Heart right ventricle (tissue), 16 donors: ENCODE measurements at regions of chr5 and their contacts with region 1.

Region 1: DNA sequence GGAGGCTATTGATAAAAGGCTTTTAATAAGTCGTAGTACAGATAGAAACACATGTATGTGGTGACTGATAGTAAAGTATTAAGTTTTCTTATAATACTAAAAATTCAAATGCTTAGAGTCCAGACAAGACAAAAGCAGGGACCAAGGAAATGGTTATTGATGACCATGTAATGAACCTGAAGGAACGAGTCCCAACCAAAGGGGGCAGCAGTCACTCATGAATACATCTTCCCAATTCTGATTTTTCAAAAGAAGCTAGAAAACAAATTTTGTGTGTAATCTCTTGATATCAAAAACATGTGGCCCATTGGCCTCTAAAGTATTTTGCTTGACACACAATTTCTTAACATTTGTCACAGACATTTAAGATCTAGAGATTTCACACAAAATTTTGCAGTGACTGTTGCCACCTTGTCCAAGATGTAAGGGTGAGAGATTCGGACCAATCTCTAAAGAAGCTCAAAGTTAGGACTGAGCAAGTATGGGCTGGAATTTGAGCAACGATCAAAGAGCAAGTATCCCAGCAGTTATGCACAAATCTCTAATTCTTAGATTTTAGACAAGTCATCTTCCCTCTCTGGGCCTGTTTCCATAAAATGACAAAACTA is 66.8 kb downstream of the ARL15 start:
- DNase-seq: peak in 1 of 2 donors; percentile 21
- ATAC-seq: no peak
- H3K4me3 ChIP-seq: no peak overlapping the region
- H3K27ac ChIP-seq: no peak overlapping the region
- H3K4me1 ChIP-seq: peaks cover 0 to 70% (median 14%) of the 10 kb centered on the region in 9 donors
- H3K27me3 ChIP-seq: no peaks in the 10 kb centered on the region
- CTCF ChIP-seq: peak; percentile 29 to 81 (median 70)

Region 2: DNA sequence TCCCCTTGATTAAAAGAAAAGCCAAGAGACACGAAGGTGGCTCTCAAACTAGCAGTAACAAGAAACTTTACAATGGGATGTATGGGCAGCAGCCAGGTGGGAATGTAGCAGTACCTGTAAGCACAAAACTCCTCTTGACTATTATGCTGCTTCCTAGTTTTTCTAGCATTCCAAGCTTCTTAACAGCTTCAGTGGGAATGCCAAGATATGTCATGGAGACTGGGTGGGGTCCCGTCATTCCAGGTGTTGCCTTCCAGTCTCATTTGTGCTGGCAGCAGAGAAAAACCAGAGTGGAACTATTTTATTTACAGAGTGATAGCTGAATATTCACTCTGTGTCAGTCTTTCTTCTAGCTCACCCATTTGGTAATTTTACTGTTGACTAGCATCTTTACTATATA is 169.8 kb before region 1 on chr5:
- intact Hi-C with region 1: no loop called
- DNase-seq: no peak
- ATAC-seq: no peak
- H3K4me3 ChIP-seq: no peak overlapping the region
- H3K27ac ChIP-seq: no peak overlapping the region
- H3K4me1 ChIP-seq: peaks cover 0 to 3% (median under 1%) of the 10 kb centered on the region in 9 donors
- H3K27me3 ChIP-seq: no peaks in the 10 kb centered on the region
- CTCF ChIP-seq: no peak

Region 3: GRCh38 chr5:54867310-54867944 is 623.9 kb after region 1 on chr5:
- intact Hi-C with region 1: loop called in 2 of 10 experiments (anchors 10 kb)
- DNase-seq: no peak
- ATAC-seq: peak in 4 of 8 donors; percentile 31 to 55 (median 47)
- H3K4me3 ChIP-seq: peak overlapping the region in 6 of 10 donors; percentile 13 to 31 (median 25)
- H3K27ac ChIP-seq: no peak overlapping the region
- H3K4me1 ChIP-seq: peaks cover 0 to 7% (median 0%) of the 10 kb centered on the region in 9 donors
- H3K27me3 ChIP-seq: no peaks in the 10 kb centered on the region
- CTCF ChIP-seq: peak; percentile 56 to 82 (median 65)

Region 4: GRCh38 chr5:54874373-54874921 is 630.9 kb after region 1 on chr5:
- intact Hi-C with region 1: loop called in 2 of 10 experiments (anchors 10 kb)
- DNase-seq: no peak
- ATAC-seq: peak in 2 of 8 donors; percentile 21 to 68
- H3K4me3 ChIP-seq: no peak overlapping the region
- H3K27ac ChIP-seq: no peak overlapping the region
- H3K4me1 ChIP-seq: peaks cover 0 to 18% (median 7%) of the 10 kb centered on the region in 9 donors
- H3K27me3 ChIP-seq: no peaks in the 10 kb centered on the region
- CTCF ChIP-seq: no peak

Region 5: GRCh38 chr5:54883374-54884212 is 640.0 kb after region 1 on chr5:
- intact Hi-C with region 1: loop called in 2 of 10 experiments (anchors 10 kb)
- DNase-seq: peak; percentile 16 to 47
- ATAC-seq: peak; percentile 61 to 81 (median 68)
- H3K4me3 ChIP-seq: peak overlapping the region; percentile 24 to 63 (median 58)
- H3K27ac ChIP-seq: peak overlapping the region in 2 of 10 donors; percentile 13 to 48
- H3K4me1 ChIP-seq: peaks cover 0 to 11% (median 7%) of the 10 kb centered on the region in 9 donors
- H3K27me3 ChIP-seq: peaks cover 0 to 48% (median 21%) of the 10 kb centered on the region in 7 donors
- CTCF ChIP-seq: no peak